Astrocyte of the cerebellum (primary cell): ENCODE measurements at regions of chr19 and their contacts with region 1.

Region 1: DNA sequence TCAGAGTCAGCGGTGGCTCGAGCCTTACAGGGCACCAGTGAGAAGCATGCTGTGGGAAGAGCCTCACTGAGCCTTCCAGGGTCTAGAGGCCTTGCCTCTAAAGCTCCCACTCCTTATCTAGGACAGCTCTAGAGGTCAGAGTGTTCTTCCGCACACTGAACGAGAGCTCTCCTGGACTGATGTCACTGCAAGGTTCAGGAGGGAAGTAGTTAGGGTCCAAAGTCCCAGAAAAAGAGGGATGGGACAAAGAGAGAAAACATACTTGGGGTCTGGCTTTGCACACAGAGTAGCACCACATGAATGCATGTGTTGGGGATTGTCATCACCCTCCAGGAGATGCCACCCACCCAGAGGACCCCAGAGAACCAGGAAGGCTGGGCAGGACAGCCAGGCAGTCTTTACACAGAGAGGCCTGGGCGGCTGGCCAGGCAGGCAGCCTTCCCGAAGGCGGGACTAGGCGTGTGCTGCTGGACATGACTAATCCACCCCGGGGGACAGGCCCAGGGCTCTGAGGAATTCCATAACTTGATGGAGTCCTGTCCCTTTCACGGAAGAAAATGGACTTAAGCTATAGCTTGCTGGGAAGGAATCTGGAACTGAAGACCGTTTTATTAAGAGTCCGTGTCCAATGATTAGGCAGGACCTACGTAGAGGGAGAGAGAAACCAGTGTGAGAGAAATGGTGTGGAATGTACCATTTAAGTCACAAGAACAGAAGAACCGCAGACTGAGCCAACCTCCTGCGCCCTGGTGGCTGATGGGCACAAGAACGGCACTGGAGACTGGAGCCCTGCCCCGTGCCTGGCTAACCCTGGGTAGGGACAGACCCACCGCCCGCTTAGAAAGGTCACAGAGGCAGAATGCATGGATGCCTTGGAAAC is 16.6 kb upstream of the EPHX3 start:
- DNase-seq: peak; percentile 81
- H3K4me3 ChIP-seq: no peak overlapping the region
- CTCF ChIP-seq: no peak

Region 2: DNA sequence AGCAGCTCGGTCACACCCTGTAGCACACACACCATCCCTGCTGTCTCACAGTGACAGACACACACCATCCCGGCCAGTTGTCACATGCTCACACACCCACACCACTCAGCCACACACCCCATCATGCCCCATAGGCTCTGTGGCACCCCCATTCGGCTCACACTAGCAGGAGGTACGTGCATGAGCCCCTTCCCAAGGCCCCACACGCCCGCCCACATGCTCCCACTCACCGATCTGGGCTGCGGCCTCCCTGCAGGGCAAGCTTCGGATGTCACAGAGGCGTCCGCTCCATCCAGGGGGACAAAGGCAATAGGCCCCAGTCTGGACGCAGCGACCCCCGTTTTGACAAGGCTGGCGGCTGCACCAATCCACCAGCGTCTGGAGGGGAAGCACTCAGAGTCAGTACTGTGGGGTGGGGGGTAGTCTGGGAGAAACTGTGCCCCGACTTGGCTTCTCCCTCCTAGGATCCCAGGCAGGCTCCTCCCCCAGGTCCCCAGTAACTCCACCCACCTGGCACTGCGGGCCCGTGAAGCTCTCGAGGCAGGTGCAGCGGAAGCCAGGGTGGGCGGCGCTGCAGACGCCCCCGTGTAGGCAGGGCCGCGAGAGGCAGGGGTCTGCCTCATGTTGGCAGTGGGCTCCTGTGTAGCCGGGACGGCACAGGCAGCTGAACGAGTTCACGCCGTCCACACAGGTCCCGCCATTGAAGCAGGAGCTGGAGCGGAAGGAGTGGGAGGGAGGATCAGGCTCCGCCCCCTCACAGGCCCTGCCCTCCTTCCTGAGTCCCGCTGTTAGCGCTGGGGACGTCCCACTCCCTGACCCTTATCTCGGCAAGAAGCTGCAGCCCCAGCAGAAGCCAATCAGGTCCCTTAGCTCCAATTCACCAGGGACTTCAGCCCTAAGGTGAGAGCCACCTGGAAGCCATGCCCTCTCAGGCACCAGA is 68.2 kb before region 1 on chr19:
- in situ Hi-C with region 1: loop called (anchors 10 kb)
- DNase-seq: no peak
- H3K4me3 ChIP-seq: no peak overlapping the region
- CTCF ChIP-seq: no peak

Region 3: GRCh38 chr19:15304140-15304705 is 55.3 kb after region 1 on chr19:
- in situ Hi-C with region 1: loop called (anchors 5 kb)
- DNase-seq: no peak
- H3K4me3 ChIP-seq: no peak overlapping the region
- CTCF ChIP-seq: no peak